ENCODE measurements at regions of chr11 and their contacts with region 1.

Region 1: GRCh38 chr11:7442588-7443215 is 42.6 kb upstream of the OLFML1 start:
- DNase-seq: no peak
- H3K4me3 ChIP-seq: no peak overlapping the region
- H3K27me3 ChIP-seq: peaks cover 8% of the 10 kb centered on the region
- CTCF ChIP-seq: peak; percentile 91

Region 2: DNA sequence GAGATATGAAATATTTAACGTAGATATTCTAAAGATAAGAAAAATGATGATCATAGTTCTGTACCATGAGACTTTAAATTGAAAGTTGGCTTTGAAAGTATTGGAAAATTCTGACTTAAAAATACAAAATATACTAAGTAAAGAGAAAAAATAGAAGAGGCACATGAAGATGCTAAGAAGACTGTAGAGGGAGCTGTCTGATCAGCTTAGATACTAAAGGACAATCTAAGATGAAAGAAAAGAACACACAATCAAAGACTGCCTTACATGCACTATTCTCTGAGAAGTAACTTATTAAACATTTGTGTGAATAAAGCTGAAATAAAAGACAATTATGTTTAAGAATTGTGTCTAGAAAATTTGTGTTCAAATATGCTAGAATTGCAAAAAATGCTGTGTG is 298.8 kb before region 1 on chr11:
- CTCF ChIA-PET with region 1: interaction called, 12 read pairs
- POLR2A ChIA-PET with region 1: no interaction called
- DNase-seq: no peak
- H3K4me3 ChIP-seq: no peak overlapping the region
- H3K27me3 ChIP-seq: no peaks in the 10 kb centered on the region
- CTCF ChIP-seq: peak; percentile 29; the same call in 1 of the 2 replicates

Region 3: GRCh38 chr11:7353100-7353499 is 89.6 kb before region 1 on chr11:
- CTCF ChIA-PET with region 1: interaction called, 66 read pairs
- POLR2A ChIA-PET with region 1: no interaction called
- DNase-seq: no peak
- H3K4me3 ChIP-seq: no peak overlapping the region
- H3K27me3 ChIP-seq: no peaks in the 10 kb centered on the region; the same call in 1 of the 2 replicates
- CTCF ChIP-seq: peak; percentile 68

Region 4: GRCh38 chr11:7657306-7658025 is 214.8 kb after region 1 on chr11:
- CTCF ChIA-PET with region 1: interaction called, 18 read pairs
- POLR2A ChIA-PET with region 1: no interaction called
- DNase-seq: no peak
- H3K4me3 ChIP-seq: no peak overlapping the region
- H3K27me3 ChIP-seq: no peaks in the 10 kb centered on the region
- CTCF ChIP-seq: peak; percentile 70

Measured in BJ (cell line).